ENCODE measurements at regions of chr16 and their contacts with region 1.

Region 1: GRCh38 chr16:77236063-77236511 is 36.9 kb downstream of the SYCE1L start:
- DNase-seq: peak; percentile 87
- H3K4me3 ChIP-seq: no peak overlapping the region
- H3K27ac ChIP-seq: no peak overlapping the region
- H3K4me1 ChIP-seq: no peaks in the 10 kb centered on the region
- H3K27me3 ChIP-seq: no peaks in the 10 kb centered on the region
- CTCF ChIP-seq: peak; percentile 99 to 100
- POLR2A ChIP-seq: no peak

Region 2: GRCh38 chr16:77298638-77299360 is 62.7 kb after region 1 on chr16:
- CTCF ChIA-PET with region 1: interaction called, 4 read pairs
- POLR2A ChIA-PET with region 1: no interaction called
- dilution Hi-C with region 1: no loop called
- intact Hi-C with region 1: loop called (anchors 1 kb)
- DNase-seq: peak; percentile 98
- H3K4me3 ChIP-seq: no peak overlapping the region
- H3K27ac ChIP-seq: peak overlapping the region; percentile 98
- H3K4me1 ChIP-seq: peaks cover 44% of the 10 kb centered on the region
- H3K27me3 ChIP-seq: no peaks in the 10 kb centered on the region
- CTCF ChIP-seq: no peak
- POLR2A ChIP-seq: peak; percentile 31

Region 3: DNA sequence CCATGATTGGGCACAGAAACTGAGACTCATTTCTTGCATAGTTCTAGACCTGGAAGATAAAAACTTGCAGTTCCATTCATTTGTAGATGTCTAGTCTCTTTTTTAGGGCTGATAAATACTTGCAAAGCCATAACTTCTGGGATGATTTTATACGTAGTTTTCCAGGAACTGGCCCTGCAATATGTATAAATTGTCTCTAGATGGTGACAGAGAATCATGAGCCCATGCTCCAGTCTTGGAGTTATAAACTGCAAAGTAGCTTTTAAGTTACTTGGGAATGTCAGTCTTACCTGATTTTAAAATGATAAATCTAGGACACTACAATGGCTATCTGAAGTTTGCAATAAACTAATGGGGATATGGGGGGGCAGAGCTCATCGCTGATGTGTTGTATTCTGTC is 201.8 kb after region 1 on chr16:
- CTCF ChIA-PET with region 1: interaction called, 41 read pairs
- POLR2A ChIA-PET with region 1: no interaction called
- dilution Hi-C with region 1: no loop called
- intact Hi-C with region 1: loop called (anchors 1 kb)
- DNase-seq: peak; percentile 73
- H3K4me3 ChIP-seq: no peak overlapping the region
- H3K27ac ChIP-seq: no peak overlapping the region
- H3K4me1 ChIP-seq: peaks cover 24% of the 10 kb centered on the region
- H3K27me3 ChIP-seq: peaks cover 0 to 3% of the 10 kb centered on the region in 2 experiments
- CTCF ChIP-seq: peak; percentile 27 to 49
- POLR2A ChIP-seq: no peak

Region 4: DNA sequence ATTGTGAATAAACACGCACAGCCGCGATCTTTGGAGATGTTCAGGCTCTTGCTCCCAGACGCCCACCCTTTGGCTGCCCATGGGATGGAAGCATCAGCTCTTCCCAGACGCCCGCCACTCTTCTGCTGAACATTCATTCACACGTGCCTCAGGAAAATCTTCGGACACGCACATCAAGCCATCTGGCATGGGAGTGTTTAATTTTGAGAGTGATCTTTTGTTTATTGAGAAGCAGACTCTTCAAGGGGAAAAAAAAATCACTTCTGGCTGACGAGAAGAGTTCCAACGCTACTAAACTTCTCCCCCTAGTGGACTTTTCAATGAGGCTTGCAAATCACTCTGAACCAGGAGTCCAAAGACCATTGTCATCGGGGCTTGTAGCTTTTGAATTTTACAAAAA is 424.2 kb after region 1 on chr16:
- CTCF ChIA-PET with region 1: interaction called, 43 read pairs
- POLR2A ChIA-PET with region 1: no interaction called
- dilution Hi-C with region 1: no loop called
- intact Hi-C with region 1: loop called (anchors 1 kb)
- DNase-seq: peak; percentile 81
- H3K4me3 ChIP-seq: no peak overlapping the region
- H3K27ac ChIP-seq: peak overlapping the region; percentile 40
- H3K4me1 ChIP-seq: peaks cover 10% of the 10 kb centered on the region
- H3K27me3 ChIP-seq: no peaks in the 10 kb centered on the region
- CTCF ChIP-seq: peak; percentile 65 to 68
- POLR2A ChIP-seq: no peak

Region 5: DNA sequence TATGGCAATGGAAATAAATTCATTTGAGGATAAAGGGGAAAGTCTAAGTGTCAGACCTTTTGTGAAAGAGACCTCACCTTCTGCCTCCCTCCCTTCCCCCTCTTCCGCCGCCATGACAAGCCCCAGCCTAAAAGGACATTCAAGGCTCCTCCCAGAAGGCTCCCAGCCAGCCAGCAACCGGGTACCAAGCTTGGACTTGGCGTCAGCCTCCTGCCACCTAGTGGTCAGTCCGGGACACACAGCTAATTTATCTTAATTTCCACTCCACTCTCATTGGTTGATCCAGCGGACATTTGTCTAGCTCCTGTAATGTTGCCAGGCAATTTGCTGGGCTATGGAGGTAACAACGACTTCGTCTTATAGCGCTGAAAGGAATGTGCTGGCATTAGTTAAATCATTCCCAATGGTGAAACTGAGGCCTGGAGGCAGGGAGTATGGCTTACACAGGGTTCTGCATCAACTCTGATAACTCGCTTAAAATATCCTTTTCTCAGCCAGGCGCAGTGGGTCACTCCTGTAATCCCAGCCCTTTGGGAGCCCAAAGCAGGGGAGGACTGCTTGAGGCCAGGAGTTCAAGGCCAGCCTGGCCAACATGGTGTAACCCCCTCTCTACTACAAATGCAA is 766.9 kb after region 1 on chr16:
- CTCF ChIA-PET with region 1: interaction called, 27 read pairs
- POLR2A ChIA-PET with region 1: no interaction called
- dilution Hi-C with region 1: no loop called
- intact Hi-C with region 1: loop called (anchors 1 kb)
- DNase-seq: peak; percentile 88
- H3K4me3 ChIP-seq: no peak overlapping the region
- H3K27ac ChIP-seq: no peak overlapping the region
- H3K4me1 ChIP-seq: no peaks in the 10 kb centered on the region
- H3K27me3 ChIP-seq: no peaks in the 10 kb centered on the region
- CTCF ChIP-seq: peak; percentile 87 to 88
- POLR2A ChIP-seq: no peak